PC-9 (cell line): ENCODE measurements at regions of chr17 and their contacts with region 1.

Region 1: GRCh38 chr17:78745407-78746088 is 36.5 kb downstream of the CYTH1 start:
- DNase-seq: peak in 1 of 2 experiments; percentile 20
- H3K4me3 ChIP-seq: no peak overlapping the region
- H3K27ac ChIP-seq: no peak overlapping the region
- H3K4me1 ChIP-seq: peaks cover 16% of the 10 kb centered on the region
- H3K27me3 ChIP-seq: no peaks in the 10 kb centered on the region
- CTCF ChIP-seq: peak; percentile 76

Region 2: DNA sequence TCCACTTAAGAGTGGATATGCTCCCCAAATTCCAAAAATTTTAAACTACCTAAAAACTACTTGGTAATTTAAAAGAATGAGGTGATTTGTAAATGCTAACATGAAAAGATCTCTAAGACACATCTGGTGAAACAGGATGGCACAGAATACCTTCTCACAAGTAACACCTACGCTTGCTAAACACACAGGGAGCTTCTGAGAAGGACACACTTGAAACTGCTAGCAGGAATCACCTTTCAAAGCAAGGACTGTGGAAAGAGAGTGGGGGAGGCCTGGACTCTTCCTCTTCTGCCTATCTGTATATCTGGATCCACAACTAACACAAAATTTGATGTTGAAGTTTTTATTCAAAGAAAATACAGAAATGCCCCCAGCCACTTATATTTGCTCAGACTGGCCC is 15.9 kb before region 1 on chr17:
- CTCF ChIA-PET with region 1: interaction called, 10 read pairs
- POLR2A ChIA-PET with region 1: no interaction called
- intact Hi-C with region 1: no loop called
- DNase-seq: no peak
- H3K4me3 ChIP-seq: no peak overlapping the region
- H3K27ac ChIP-seq: no peak overlapping the region
- H3K4me1 ChIP-seq: peaks cover 3% of the 10 kb centered on the region; the same call in 1 of the 2 replicates
- H3K27me3 ChIP-seq: no peaks in the 10 kb centered on the region
- CTCF ChIP-seq: no peak